ENCODE measurements at regions of chr11 and their contacts with region 1.

Region 1: GRCh38 chr11:64989416-64989815 is 7.4 kb downstream of the BATF2 start:
- DNase-seq: no peak
- ATAC-seq: peak; percentile 29 to 47 (median 44)
- H3K4me3 ChIP-seq: peak overlapping the region in 2 of 3 donors; percentile 14
- H3K27ac ChIP-seq: peak overlapping the region; percentile 15 to 65 (median 25)
- H3K4me1 ChIP-seq: peaks cover 0 to 14% (median 5%) of the 10 kb centered on the region in 4 donors
- H3K27me3 ChIP-seq: no peaks in the 10 kb centered on the region
- CTCF ChIP-seq: no peak
- POLR2A ChIP-seq: no peak

Region 2: DNA sequence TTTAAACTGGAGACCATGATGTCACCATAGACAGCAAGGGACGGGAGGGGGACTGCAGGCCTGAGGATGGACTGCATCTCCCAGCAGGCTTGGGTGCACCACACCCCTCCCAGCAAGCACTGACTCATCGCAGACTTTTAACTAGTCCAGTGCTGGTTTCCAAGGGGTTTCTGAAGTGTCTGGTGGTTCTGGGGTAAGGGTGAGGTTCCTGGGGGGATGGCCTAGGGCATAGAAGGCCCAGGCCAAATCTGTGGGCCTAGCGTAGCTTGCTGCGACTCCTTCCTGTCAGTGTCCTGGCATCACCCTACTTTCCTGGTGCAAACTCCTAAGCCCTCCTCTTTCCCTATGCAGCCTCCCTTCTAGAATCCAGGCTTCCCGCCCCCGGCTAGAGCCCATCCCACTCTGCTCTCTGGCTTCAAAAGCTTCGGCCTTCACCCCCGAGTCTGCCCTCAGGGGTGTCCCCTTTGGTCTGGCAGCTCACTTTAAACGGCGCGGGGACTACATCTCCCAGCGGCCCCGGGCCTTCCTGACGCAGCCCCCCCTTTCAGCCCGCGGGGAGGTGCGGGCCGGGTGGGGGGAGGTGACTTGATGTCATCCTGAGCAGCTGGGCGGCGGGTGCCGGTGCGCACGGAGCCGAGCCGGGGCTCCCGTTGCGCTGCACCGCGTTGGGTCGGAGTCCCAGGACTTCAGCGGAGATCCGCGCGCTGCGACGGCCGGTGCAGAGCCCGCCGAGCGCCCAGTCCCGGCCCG is 65.1 kb before region 1 on chr11 and contains the start of gene PPP2R5B:
- intact Hi-C with region 1: loop called in 1 of 2 experiments (anchors 10 kb)
- DNase-seq: peak; percentile 95 to 97 (median 96)
- ATAC-seq: peak; percentile 95 to 97 (median 96)
- H3K4me3 ChIP-seq: peak within 1 kb of the TSS; percentile 79 to 97 (median 89)
- H3K27ac ChIP-seq: peak within 1 kb of the TSS; percentile 94 to 98 (median 94)
- H3K4me1 ChIP-seq: peaks cover 0 to 7% (median 2%) of the 10 kb centered on the region in 4 donors
- H3K27me3 ChIP-seq: no peaks in the 10 kb centered on the region
- CTCF ChIP-seq: no peak
- POLR2A ChIP-seq: peak; percentile 86
- total RNA-seq, gene PPP2R5B: 6.8 to 12.6 (median 8.9) TPM

Region 3: DNA sequence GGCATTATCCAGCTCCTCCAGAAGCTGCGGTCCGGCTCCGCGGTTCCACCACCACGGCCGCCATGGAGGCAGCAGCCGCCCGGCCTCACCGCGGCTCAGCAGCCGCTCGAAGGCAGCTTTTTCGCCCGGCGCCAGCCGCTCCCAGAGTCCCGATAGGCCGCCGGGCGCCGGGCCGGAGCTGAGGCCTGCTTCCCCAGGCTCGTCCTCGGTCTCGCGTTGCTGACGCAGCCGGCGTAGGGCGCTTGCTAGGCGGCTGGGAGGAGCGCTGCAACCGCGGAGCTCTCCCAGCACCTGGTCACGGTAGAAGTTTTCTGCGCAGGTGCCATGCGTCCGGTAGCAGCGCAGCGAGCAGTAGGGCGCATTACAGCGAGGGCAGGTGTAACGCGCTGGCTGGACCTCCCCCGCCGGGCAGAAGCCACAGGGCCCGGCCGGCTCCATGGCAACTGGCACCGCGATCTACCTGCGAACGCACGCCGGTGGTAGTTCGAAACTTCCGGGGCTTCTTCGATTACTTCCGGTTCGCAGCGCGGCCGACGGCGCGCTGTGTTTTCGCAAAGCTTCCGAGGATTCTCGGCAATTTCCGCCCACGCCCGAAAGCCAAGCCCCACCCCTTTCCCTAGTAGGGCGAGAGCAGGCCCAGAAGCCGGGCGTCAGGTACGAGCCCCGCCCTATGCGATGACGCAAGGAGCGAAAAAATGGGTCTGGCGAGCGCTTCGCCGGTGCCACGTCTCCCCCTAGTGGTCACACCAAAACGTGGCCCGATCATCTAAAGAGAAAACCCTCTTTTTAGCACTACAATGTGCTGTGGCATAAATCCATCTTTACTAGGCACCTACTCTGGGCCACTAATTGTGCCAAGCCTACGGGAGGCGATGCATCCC is 128.0 kb after region 1 on chr11 and contains the start of gene ZNHIT2:
- intact Hi-C with region 1: no loop called
- DNase-seq: peak; percentile 99 to 100 (median 99)
- ATAC-seq: peak; percentile 75 to 85 (median 82)
- H3K4me3 ChIP-seq: peak within 1 kb of the TSS; percentile 68 to 91 (median 89)
- H3K27ac ChIP-seq: peak within 1 kb of the TSS; percentile 27 to 92 (median 64)
- H3K4me1 ChIP-seq: peaks cover 0 to 39% (median 22%) of the 10 kb centered on the region in 4 donors
- H3K27me3 ChIP-seq: no peaks in the 10 kb centered on the region
- CTCF ChIP-seq: peak; percentile 95 to 97 (median 96)
- POLR2A ChIP-seq: peak; percentile 75
- total RNA-seq, gene ZNHIT2: 4.9 to 15.7 (median 6.2) TPM

Region 4: GRCh38 chr11:65506770-65507505 is 517.5 kb after region 1 on chr11:
- intact Hi-C with region 1: no loop called
- DNase-seq: peak in 1 of 3 donors; percentile 54
- ATAC-seq: peak; percentile 9 to 24 (median 16)
- H3K4me3 ChIP-seq: no peak overlapping the region
- H3K27ac ChIP-seq: peak overlapping the region; percentile 84 to 100 (median 99)
- H3K4me1 ChIP-seq: peaks cover 0 to 36% (median 0%) of the 10 kb centered on the region in 4 donors
- H3K27me3 ChIP-seq: no peaks in the 10 kb centered on the region
- CTCF ChIP-seq: no peak
- POLR2A ChIP-seq: peak; percentile 73